Cardiac septum (tissue), 1 donor: ENCODE measurements at regions of chr5 and their contacts with region 1.

Region 1: DNA sequence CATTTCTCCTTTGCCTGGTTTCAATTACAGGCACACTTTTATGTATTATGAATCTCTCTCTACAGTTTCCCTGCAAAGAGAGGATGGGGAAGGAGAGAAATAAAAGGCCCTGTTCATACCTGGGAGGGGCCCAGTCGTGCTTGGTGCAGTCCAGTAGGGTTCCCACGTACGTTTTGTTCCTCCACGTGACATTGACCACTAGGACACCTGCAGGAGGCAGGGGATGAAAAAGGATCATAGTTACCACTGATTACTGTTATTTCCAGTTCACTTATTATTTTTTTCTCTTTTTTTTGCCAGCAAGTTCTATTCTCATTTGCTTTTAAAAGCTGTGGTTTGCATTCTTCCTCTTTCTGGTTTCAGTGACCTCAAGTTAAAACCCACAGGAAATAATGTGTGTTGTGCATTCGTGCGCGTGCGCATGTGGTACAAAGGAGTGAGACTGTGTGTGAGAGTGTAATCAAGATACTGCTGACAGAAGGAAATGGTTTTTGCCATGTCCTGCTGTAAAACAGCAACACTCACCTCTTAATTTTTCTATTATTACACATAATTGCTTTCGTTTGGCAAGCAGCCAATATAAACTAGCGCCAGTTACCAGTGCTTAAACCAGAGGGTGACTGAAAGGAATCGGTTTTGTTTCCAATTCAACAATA is 96.8 kb downstream of the ZNF608 start:
- DNase-seq: peak; percentile 94

Region 2: DNA sequence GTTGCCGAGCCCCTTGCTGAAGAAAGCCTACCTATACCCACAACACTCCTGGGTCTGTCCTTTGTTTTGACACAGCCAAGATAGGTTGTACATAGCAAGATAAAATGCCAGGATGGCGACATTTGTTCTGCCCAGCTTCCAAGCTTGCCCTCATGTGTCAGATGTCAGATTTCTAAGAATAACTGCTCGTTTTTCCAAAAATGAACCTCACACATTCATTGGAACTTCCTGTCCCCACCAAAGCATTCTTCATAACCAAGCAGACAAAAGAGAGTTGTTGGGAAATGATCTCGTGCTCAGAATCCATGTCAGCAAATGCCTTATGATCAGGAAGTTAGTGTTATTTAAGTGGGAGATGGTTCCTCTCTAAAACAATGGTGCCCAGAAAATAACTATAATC is 113.3 kb before region 1 on chr5:
- intact Hi-C with region 1: loop called (anchors 5 kb)
- DNase-seq: no peak

Region 3: GRCh38 chr5:124605541-124605940 is 44.1 kb before region 1 on chr5:
- intact Hi-C with region 1: loop called (anchors 5 kb)
- DNase-seq: no peak

Region 4: GRCh38 chr5:124706729-124707361 is 57.2 kb after region 1 on chr5:
- intact Hi-C with region 1: loop called (anchors 5 kb)
- DNase-seq: peak; percentile 77

Region 5: GRCh38 chr5:124812754-124813358 is 163.2 kb after region 1 on chr5:
- intact Hi-C with region 1: no loop called
- DNase-seq: no peak